ENCODE measurements at regions of chr2 and their contacts with region 1.

Region 1: GRCh38 chr2:137467246-137467862 is 496.9 kb upstream of the HNMT start:
- DNase-seq: peak; percentile 39
- H3K4me3 ChIP-seq: no peak overlapping the region
- H3K27ac ChIP-seq: no peak overlapping the region
- H3K4me1 ChIP-seq: peaks cover 37% of the 10 kb centered on the region
- CTCF ChIP-seq: peak; percentile 79

Region 2: GRCh38 chr2:137208431-137208891 is 258.9 kb before region 1 on chr2:
- CTCF ChIA-PET with region 1: no interaction called
- POLR2A ChIA-PET with region 1: no interaction called
- intact Hi-C with region 1: loop called (anchors 5 kb)
- DNase-seq: no peak
- H3K4me3 ChIP-seq: no peak overlapping the region
- H3K27ac ChIP-seq: no peak overlapping the region
- H3K4me1 ChIP-seq: peaks cover 25% of the 10 kb centered on the region
- CTCF ChIP-seq: no peak

Region 3: DNA sequence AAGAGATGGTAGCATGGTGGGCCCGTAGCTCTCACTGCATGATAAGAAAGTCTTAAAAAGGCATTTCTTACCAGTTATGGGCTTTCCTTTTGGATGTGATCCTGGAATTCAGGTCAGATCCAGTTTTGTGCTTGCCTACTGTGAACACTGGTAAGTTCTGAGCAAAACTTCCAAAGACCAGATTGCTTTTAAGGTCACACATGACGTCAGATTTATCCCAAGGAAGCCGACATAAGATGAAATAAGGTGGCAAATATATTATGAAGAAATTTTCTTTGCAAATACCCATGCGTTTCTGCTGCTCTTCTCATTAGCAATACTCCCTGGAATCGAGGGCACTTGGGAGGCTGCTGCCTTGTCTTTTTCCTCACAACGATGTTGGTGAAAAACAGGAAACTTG is 80.5 kb after region 1 on chr2:
- CTCF ChIA-PET with region 1: no interaction called
- POLR2A ChIA-PET with region 1: no interaction called
- intact Hi-C with region 1: no loop called
- DNase-seq: no peak
- H3K4me3 ChIP-seq: no peak overlapping the region
- H3K27ac ChIP-seq: no peak overlapping the region
- H3K4me1 ChIP-seq: no peaks in the 10 kb centered on the region
- CTCF ChIP-seq: no peak

Region 4: GRCh38 chr2:137659612-137660011 is 192.3 kb after region 1 on chr2:
- CTCF ChIA-PET with region 1: no interaction called
- POLR2A ChIA-PET with region 1: no interaction called
- intact Hi-C with region 1: loop called (anchors 10 kb)
- DNase-seq: no peak
- H3K4me3 ChIP-seq: no peak overlapping the region
- H3K27ac ChIP-seq: no peak overlapping the region
- H3K4me1 ChIP-seq: no peaks in the 10 kb centered on the region
- CTCF ChIP-seq: no peak; the same call in 1 of the 2 replicates

Region 5: GRCh38 chr2:137677463-137677862 is 210.1 kb after region 1 on chr2:
- CTCF ChIA-PET with region 1: no interaction called
- POLR2A ChIA-PET with region 1: no interaction called
- intact Hi-C with region 1: loop called (anchors 5 kb)
- DNase-seq: peak; percentile 2
- H3K4me3 ChIP-seq: no peak overlapping the region
- H3K27ac ChIP-seq: no peak overlapping the region
- H3K4me1 ChIP-seq: no peaks in the 10 kb centered on the region
- CTCF ChIP-seq: peak; percentile 61

Region 6: DNA sequence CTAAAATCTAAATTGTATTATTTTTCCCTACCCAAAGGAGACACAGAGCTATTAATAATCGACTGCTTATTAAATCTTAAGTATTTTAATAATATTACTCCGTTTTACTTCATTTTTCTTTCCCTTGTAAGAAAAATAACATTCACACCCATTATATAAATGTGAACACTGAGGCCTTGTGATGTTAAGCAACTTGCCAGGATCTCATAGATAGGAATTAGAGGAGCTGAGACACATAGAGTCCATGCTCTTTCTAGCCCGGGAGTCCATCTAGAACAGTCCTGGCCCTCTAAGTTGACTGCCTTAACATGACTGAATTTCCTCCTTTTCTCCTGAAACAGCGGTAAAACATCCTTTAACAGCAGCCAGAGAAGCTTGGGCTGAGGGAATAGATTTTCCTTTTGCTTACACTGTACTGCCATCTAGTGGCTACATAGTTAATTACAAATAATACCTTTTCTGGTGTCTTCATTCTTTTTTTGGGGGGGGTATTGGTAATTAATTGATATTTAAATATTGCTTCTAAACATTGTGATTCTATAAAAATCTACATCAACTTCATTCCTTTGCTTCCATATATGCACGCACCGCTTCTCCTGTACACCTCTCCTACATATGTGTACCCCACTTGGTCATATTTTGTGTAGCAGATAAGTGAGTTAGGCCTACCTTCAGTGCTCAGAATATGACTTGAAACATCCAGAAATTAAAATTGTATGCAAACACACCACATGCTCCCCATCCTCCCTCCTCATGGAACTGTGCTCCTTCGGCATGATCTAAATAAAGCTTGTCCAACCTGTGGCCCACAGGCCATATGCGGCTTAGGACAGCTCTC is 371.1 kb after region 1 on chr2:
- CTCF ChIA-PET with region 1: no interaction called
- POLR2A ChIA-PET with region 1: interaction called, 3 read pairs
- intact Hi-C with region 1: loop called (anchors 2 kb)
- DNase-seq: peak; percentile 50
- H3K4me3 ChIP-seq: no peak overlapping the region
- H3K27ac ChIP-seq: no peak overlapping the region
- H3K4me1 ChIP-seq: no peaks in the 10 kb centered on the region
- CTCF ChIP-seq: peak; percentile 85

Measured in OCI-LY7 (cell line).